ENCODE measurements at regions of chr17 and their contacts with region 1.

Region 1: DNA sequence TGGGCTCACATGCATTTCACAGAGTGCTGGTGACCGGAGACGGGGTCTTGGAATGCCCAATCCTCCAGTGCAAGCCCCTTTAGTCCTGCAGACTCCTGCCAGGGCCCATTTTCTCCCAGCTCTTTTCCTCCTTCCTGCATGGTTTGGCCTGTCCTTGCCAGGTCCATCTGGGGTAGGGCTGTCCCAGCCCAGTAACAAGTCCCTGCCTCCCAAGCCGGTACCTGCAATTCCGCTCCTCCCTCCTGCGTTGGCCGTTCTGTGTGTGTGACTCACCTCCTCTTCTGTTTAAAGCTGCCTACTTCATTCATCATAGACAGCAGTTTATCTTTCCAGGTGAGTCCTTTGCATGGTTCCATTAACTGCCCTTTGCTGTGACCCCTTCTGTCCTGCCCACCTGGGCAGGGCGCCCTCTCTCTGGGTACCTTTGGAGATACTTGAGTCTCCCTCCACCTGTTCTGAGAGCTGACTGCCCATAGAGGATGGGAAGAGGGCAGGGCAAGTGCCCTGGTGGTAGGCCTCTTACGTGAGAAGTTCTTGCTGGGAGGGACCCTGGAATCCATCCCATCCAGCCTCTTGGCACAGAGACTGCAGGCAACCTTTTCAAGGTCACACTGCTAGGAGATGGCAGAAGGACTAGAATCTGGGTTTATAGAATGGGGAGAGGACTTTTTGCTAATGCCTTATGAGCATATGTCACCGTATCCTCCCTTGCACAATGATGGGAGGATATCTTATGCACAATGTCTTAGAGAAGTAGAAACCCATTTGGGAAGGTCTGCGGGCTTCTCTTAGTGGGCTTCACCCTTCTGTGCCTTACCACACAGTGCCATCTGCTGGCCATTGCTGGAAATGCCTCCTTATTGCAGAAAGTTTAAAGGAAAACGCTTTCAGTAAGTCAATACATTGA is 29.7 kb upstream of the LGALS9 start:
- DNase-seq: peak; percentile 49
- H3K4me3 ChIP-seq: no peak overlapping the region
- H3K27ac ChIP-seq: no peak overlapping the region
- H3K4me1 ChIP-seq: peaks cover 13% of the 10 kb centered on the region
- H3K27me3 ChIP-seq: no peaks in the 10 kb centered on the region
- CTCF ChIP-seq: peak; percentile 89 to 96

Region 2: DNA sequence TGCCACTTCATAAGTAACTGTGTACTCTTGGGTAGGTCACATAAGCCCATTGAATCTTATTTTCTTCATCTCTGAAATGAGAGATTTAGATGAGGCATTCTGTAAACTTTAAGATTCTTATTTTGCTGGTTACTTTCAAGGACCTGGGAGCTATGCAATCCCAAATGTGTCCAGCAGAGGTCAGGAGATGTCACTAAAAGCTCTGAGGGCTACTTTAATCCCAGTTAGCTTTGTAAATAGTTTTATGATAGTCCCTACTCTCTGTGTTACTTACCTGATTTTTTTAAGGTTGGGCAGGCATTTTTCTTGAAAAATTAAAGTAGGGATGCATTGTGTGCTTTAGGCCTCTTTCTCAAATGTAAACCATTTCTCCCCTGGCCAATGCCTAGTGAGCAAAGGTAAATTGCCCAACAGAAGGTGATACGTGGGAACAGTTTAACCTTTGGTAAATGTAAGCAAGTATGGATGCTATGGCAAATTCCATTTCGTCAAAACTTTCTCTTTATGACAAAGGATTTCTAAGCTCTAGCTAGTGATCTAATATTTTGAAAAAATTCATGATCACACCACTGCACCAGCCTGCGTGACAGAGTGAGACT is 364.5 kb before region 1 on chr17:
- CTCF ChIA-PET with region 1: interaction called, 5 read pairs
- dilution Hi-C with region 1: loop called (anchors 25 kb)
- in situ Hi-C with region 1: loop called in 1 of 2 experiments (anchors 25 kb)
- intact Hi-C with region 1: loop called (anchors 1 kb)
- DNase-seq: peak; percentile 52
- H3K4me3 ChIP-seq: no peak overlapping the region
- H3K27ac ChIP-seq: no peak overlapping the region
- H3K4me1 ChIP-seq: peaks cover 7% of the 10 kb centered on the region
- H3K27me3 ChIP-seq: no peaks in the 10 kb centered on the region
- CTCF ChIP-seq: peak; percentile 90 to 96

Region 3: GRCh38 chr17:27332485-27333409 is 268.6 kb before region 1 on chr17:
- CTCF ChIA-PET with region 1: no interaction called
- dilution Hi-C with region 1: no loop called
- in situ Hi-C with region 1: no loop called
- intact Hi-C with region 1: loop called (anchors 1 kb)
- DNase-seq: peak; percentile 98
- H3K4me3 ChIP-seq: peak overlapping the region; percentile 51 to 62 (median 57)
- H3K27ac ChIP-seq: peak overlapping the region; percentile 89
- H3K4me1 ChIP-seq: peaks cover 30% of the 10 kb centered on the region
- H3K27me3 ChIP-seq: no peaks in the 10 kb centered on the region
- CTCF ChIP-seq: peak; percentile 65 to 91

Region 4: GRCh38 chr17:27446569-27447301 is 154.6 kb before region 1 on chr17:
- CTCF ChIA-PET with region 1: no interaction called
- dilution Hi-C with region 1: no loop called
- in situ Hi-C with region 1: loop called in 1 of 2 experiments (anchors 10 kb)
- intact Hi-C with region 1: no loop called
- DNase-seq: peak; percentile 80
- H3K4me3 ChIP-seq: no peak overlapping the region
- H3K27ac ChIP-seq: no peak overlapping the region
- H3K4me1 ChIP-seq: peaks cover 9% of the 10 kb centered on the region
- H3K27me3 ChIP-seq: peaks cover 2% of the 10 kb centered on the region
- CTCF ChIP-seq: no peak

Region 5: DNA sequence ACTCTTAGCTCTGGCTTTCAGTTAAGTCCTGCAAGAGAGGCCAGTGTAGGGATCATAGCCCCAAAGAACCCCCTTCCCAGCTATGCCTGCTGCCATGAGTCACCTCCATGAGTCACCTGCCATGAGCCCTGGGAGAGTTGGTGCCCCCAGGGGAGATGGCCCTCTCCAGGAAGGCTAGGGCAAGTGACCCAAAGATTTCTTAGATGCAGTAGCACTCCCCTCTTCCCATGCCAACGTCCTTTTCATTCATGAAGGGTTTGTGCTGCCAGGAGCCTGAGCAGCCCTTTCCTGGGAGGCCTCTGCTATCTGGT is 48.9 kb before region 1 on chr17:
- CTCF ChIA-PET with region 1: no interaction called
- dilution Hi-C with region 1: no loop called
- in situ Hi-C with region 1: no loop called
- intact Hi-C with region 1: no loop called
- DNase-seq: peak; percentile 59
- H3K4me3 ChIP-seq: no peak overlapping the region
- H3K27ac ChIP-seq: no peak overlapping the region
- H3K4me1 ChIP-seq: peaks cover 20% of the 10 kb centered on the region
- H3K27me3 ChIP-seq: no peaks in the 10 kb centered on the region
- CTCF ChIP-seq: no peak

Region 6: DNA sequence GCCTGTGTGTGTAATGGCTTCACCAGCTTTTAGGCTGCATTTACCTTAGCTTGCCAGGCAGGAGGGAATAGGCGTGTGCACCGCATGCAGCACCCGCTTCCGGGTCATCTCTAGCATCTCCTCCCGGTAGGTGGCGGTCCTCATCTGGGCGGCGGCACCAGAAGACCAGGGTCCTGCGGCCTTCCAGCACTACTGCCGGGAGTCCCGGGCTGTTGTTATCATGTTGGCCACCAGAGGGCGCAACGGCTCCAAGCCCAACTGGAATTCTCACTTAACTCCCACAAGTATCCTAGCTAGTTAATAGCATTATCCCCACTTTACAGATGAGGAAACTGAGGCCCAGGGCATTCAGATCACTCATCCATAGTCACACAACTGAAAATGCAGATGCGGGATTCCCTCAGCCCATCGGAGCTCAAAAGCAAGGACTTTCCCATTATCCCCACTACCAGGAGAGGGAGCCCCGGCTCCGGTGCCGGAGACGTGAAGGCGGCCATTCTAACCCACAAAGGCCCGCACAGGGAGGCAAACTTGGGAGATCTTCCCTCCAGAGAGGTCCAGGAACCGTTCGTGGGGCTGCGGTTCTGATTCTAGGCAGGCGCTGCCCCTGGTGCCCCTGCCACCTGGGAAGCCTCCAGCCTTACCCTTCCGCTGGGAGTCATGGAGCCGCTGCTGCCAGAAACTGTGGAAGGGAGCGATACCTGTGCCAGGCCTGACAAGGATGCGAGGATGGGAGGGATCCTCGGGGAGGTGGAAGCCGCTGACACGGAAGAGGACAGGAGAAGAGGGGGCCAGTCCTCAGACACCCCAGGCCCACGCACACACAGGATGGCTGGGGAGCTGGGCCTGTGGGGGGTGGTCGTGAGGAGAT is 53.6 kb after region 1 on chr17:
- CTCF ChIA-PET with region 1: no interaction called
- dilution Hi-C with region 1: loop called (anchors 5 kb)
- in situ Hi-C with region 1: loop called in 1 of 2 experiments (anchors 5 kb)
- intact Hi-C with region 1: loop called (anchors 1 kb)
- DNase-seq: peak; percentile 47
- H3K4me3 ChIP-seq: no peak overlapping the region
- H3K27ac ChIP-seq: no peak overlapping the region
- H3K4me1 ChIP-seq: no peaks in the 10 kb centered on the region
- H3K27me3 ChIP-seq: peaks cover under 1% of the 10 kb centered on the region
- CTCF ChIP-seq: peak; percentile 55 to 74

Measured in mammary epithelial cell (primary cell).